HepG2 (cell line): ENCODE measurements at regions of chr21 and their contacts with region 1.

Region 1: DNA sequence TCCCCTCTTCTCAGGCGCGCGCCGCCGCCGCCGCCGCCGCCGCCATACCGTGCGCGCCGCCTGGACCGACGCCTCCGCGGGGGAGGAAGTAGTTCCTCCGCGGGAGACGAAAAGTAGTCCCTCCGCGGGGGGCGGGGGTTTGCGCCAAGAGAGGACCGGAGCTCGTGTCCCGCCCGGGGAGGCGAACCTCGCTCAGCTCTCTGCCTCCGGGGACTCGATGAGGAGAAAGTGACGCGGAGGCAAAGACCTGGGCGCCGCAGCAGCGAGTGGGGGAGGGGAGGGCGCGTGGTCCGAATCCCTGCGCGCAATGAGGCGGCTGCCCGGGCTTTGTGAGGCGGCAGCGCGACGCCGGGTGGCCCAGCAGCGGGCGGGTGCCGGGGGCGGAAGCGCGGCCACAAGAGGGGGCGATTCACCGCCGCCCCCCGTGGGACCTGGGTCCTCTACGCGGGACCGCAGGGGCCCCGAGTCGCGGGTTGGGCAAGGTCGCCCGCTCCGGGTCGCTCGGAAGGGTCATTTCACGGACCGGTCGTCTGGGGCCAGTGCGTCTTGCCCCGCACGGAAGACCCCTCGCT is at the start of gene BRWD1:
- DNase-seq: peak; percentile 72
- ATAC-seq: peak; percentile 77
- H3K4me3 ChIP-seq: peak within 1 kb of the TSS; percentile 61 to 76 (median 72)
- H3K27ac ChIP-seq: peak within 1 kb of the TSS; percentile 98
- H3K4me1 ChIP-seq: peaks cover 41% of the 10 kb centered on the region
- H3K27me3 ChIP-seq: no peaks in the 10 kb centered on the region; a peak in 1 of 5 replicates
- CTCF ChIP-seq: peak; percentile 60
- EP300 ChIP-seq: no peak
- POLR2A ChIP-seq: peak; percentile 49 to 58; a peak in 3 of 4 replicates
- RAD21 ChIP-seq: peak; percentile 68
- total RNA-seq, gene BRWD1: 28.0 and 28.7 TPM in 2 replicates

Region 2: GRCh38 chr21:39183237-39184007 is 130.2 kb before region 1 on chr21 and contains the start of gene PSMG1:
- CTCF ChIA-PET with region 1: no interaction called
- POLR2A ChIA-PET with region 1: interaction called, 15 read pairs
- in situ Hi-C with region 1: no loop called
- intact Hi-C with region 1: no loop called
- DNase-seq: peak; percentile 88
- ATAC-seq: peak; percentile 93
- H3K4me3 ChIP-seq: peak within 1 kb of the TSS; percentile 91 to 96 (median 92)
- H3K27ac ChIP-seq: peak within 1 kb of the TSS; percentile 82
- H3K4me1 ChIP-seq: peaks cover 32% of the 10 kb centered on the region
- H3K27me3 ChIP-seq: no peaks in the 10 kb centered on the region; a peak in 1 of 5 replicates
- CTCF ChIP-seq: 0 out of 2 replicates have a peak, but pooled peaks have one; percentile 12
- EP300 ChIP-seq: no peak
- POLR2A ChIP-seq: peak; percentile 90 to 97
- RAD21 ChIP-seq: peak; percentile 26; the same call in 1 of the 2 replicates
- total RNA-seq, gene PSMG1: 173 and 184 TPM in 2 replicates

Region 3: GRCh38 chr21:39349211-39350093 is 35.8 kb after region 1 on chr21:
- CTCF ChIA-PET with region 1: no interaction called
- POLR2A ChIA-PET with region 1: interaction called, 38 read pairs
- in situ Hi-C with region 1: no loop called
- intact Hi-C with region 1: loop called (anchors 2 kb)
- DNase-seq: peak; percentile 93
- ATAC-seq: peak; percentile 95
- H3K4me3 ChIP-seq: peak overlapping the region; percentile 73 to 83 (median 82)
- H3K27ac ChIP-seq: peak overlapping the region; percentile 96
- H3K4me1 ChIP-seq: peaks cover 40% of the 10 kb centered on the region
- H3K27me3 ChIP-seq: no peaks in the 10 kb centered on the region; a peak in 1 of 5 replicates
- CTCF ChIP-seq: no peak
- EP300 ChIP-seq: no peak
- POLR2A ChIP-seq: peak; percentile 56 to 91; a peak in 3 of 4 replicates
- RAD21 ChIP-seq: peak; percentile 25; the same call in 1 of the 2 replicates

Region 4: GRCh38 chr21:39379986-39380891 is 66.6 kb after region 1 on chr21:
- CTCF ChIA-PET with region 1: no interaction called
- POLR2A ChIA-PET with region 1: interaction called, 47 read pairs
- in situ Hi-C with region 1: no loop called
- intact Hi-C with region 1: no loop called
- DNase-seq: peak; percentile 85
- ATAC-seq: peak; percentile 97
- H3K4me3 ChIP-seq: peak overlapping the region; percentile 82 to 97 (median 91)
- H3K27ac ChIP-seq: peak overlapping the region; percentile 75
- H3K4me1 ChIP-seq: peaks cover 38% of the 10 kb centered on the region
- H3K27me3 ChIP-seq: no peaks in the 10 kb centered on the region; a peak in 1 of 5 replicates
- CTCF ChIP-seq: no peak
- EP300 ChIP-seq: no peak
- POLR2A ChIP-seq: peak in 1 of 2 experiments; percentile 69; a peak in 2 of 4 replicates
- RAD21 ChIP-seq: no peak